Dorsolateral prefrontal cortex (tissue), 120 donors: ENCODE measurements at regions of chr22 and their contacts with region 1.

Region 1: GRCh38 chr22:34070051-34070450 is 149.8 kb upstream of the LARGE1 start:
- DNase-seq: peak in 4 of 10 donors; percentile 35 to 58 (median 46)
- H3K4me3 ChIP-seq: no peak overlapping the region
- H3K27ac ChIP-seq: peak overlapping the region in 16 of 59 donors; percentile 10 to 77 (median 60)
- H3K27me3 ChIP-seq: peaks cover 0 to 2% (median 0%) of the 10 kb centered on the region in 45 donors
- CTCF ChIP-seq: no peak

Region 2: DNA sequence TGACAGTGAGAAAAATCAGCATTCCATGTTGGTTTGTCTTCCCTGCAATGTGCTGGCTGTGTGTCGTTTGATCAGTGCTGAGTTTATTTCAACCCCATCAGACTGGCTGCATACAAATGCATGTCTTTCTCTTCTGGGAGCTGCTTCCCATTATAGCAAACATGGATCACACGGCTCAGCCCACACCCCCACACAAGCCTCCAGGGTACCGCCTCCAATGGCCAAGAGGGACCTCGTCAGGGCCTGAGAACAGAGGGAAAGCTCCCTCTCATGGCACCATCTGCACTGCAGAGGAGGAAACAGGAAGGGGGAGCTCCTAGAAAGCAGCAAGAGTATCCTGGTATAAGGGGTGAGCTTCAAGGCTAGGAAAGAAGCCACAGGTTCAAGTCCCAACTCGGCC is 364.0 kb before region 1 on chr22:
- intact Hi-C with region 1: loop called in 1 of 2 experiments (anchors 5 kb)
- DNase-seq: peak in 6 of 10 donors; percentile 46 to 66 (median 60)
- H3K4me3 ChIP-seq: no peak overlapping the region
- H3K27ac ChIP-seq: peak overlapping the region in 35 of 59 donors; percentile 2 to 77 (median 49)
- H3K27me3 ChIP-seq: no peaks in the 10 kb centered on the region
- CTCF ChIP-seq: peak in 3 of 56 donors; percentile 6 to 15 (median 13)